ENCODE measurements at regions of chr2 and their contacts with region 1.

Region 1: GRCh38 chr2:179460181-179460929 is 195.7 kb upstream of the SESTD1 start:
- DNase-seq: no peak
- ATAC-seq: peak; percentile 5
- H3K4me3 Mint-ChIP-seq: no peak overlapping the region
- H3K27ac Mint-ChIP-seq: peak overlapping the region; percentile 47
- H3K4me1 Mint-ChIP-seq: no peaks in the 10 kb centered on the region
- H3K27me3 Mint-ChIP-seq: peaks cover 3% of the 10 kb centered on the region
- CTCF ChIP-seq: no peak

Region 2: GRCh38 chr2:178380763-178381162 is 1079.6 kb before region 1 on chr2:
- CTCF ChIA-PET with region 1: no interaction called
- POLR2A ChIA-PET with region 1: no interaction called
- intact Hi-C with region 1: loop called (anchors 5 kb)
- DNase-seq: no peak
- ATAC-seq: no peak
- H3K4me3 Mint-ChIP-seq: no peak overlapping the region
- H3K27ac Mint-ChIP-seq: no peak overlapping the region
- H3K4me1 Mint-ChIP-seq: no peaks in the 10 kb centered on the region
- H3K27me3 Mint-ChIP-seq: peaks cover 16% of the 10 kb centered on the region
- CTCF ChIP-seq: no peak

Measured in activated B cell treated with CpG ODN at 0.5 μM for 24 hours (primary cell).